ENCODE measurements at regions of chr1 and their contacts with region 1.

Region 1: DNA sequence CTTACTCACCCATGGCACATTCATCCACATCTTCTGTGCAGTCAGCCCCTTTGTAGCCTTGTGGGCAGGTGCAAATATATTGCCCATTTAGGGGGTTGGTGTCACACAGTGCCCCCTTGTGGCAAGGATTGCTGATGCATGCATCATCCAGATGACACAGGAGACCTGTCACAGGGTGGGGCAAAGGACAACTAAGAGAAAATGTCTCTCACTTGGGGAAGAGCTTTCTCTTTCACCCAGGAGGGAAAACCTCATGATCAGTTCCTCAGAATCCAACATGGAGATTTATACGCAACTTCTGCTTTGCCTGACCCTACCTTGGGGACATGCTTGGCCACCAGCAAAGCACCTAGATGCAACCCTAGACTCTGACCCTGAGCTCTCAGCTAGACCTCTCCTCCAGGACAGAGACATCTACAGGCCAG is 71.8 kb upstream of the ADAM30 start:
- DNase-seq: peak; percentile 49 to 70 (median 55)
- H3K4me3 ChIP-seq: no peak overlapping the region
- H3K4me3 Mint-ChIP-seq: no peak overlapping the region
- H3K27ac ChIP-seq: no peak overlapping the region
- H3K27ac Mint-ChIP-seq: peak overlapping the region in 5 of 7 donors; percentile 21 to 82 (median 73)
- H3K4me1 ChIP-seq: no peaks in the 10 kb centered on the region
- H3K4me1 Mint-ChIP-seq: peaks cover 2 to 6% (median 4%) of the 10 kb centered on the region in 4 donors
- H3K27me3 ChIP-seq: no peaks in the 10 kb centered on the region
- H3K27me3 Mint-ChIP-seq: no peaks in the 10 kb centered on the region

Region 2: DNA sequence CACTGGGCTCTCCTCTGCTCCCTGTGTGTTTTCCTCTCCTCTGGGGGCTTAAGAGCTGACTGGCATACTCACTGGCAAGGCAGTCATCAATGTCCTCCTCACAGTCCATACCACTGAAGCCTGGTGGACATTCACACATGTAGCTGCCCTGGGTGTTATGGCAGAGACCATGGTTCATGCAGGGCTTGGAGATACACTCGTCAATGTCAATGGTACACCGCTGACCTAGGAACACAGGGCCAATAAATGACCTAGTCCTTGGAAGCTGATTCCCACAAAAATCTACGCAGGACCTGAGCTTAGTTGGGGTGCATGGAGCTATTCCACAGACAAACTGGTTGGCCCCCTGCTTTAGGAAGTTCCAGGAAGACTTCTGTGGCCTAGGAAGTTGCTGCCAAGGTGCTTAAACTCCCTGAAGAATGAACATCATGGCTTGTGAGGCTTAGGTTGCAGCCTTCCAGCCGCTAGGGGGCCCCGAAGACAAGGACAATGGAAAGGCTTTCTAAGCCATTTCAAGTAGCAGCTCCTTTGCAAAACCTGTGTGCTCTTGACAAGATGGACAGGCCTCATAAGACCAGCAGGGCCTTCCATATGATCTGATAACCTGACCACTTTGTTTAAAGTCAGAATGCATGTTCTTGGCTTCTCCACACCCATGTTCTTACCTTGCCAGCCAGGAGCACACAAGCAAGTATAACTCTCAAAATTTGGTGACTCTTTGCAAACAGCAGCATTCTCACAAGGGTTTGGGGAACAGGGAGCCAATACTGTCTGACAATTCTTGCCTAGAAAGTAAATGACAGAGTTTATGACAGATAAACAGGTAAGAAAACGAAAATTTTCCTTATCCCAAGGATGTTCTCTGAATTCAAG is 19.5 kb before region 1 on chr1:
- CTCF ChIA-PET with region 1: interaction called, 76 read pairs
- POLR2A ChIA-PET with region 1: no interaction called
- intact Hi-C with region 1: no loop called
- DNase-seq: peak; percentile 49 to 60 (median 53)
- H3K4me3 ChIP-seq: no peak overlapping the region
- H3K4me3 Mint-ChIP-seq: no peak overlapping the region
- H3K27ac ChIP-seq: no peak overlapping the region
- H3K27ac Mint-ChIP-seq: no peak overlapping the region
- H3K4me1 ChIP-seq: no peaks in the 10 kb centered on the region
- H3K4me1 Mint-ChIP-seq: peaks cover 0 to 2% (median 0%) of the 10 kb centered on the region in 4 donors
- H3K27me3 ChIP-seq: no peaks in the 10 kb centered on the region
- H3K27me3 Mint-ChIP-seq: no peaks in the 10 kb centered on the region

Region 3: GRCh38 chr1:119984771-119985170 is 16.7 kb after region 1 on chr1:
- CTCF ChIA-PET with region 1: interaction called, 13 read pairs
- POLR2A ChIA-PET with region 1: no interaction called
- intact Hi-C with region 1: no loop called
- DNase-seq: no peak
- H3K4me3 ChIP-seq: no peak overlapping the region
- H3K4me3 Mint-ChIP-seq: no peak overlapping the region
- H3K27ac ChIP-seq: no peak overlapping the region
- H3K27ac Mint-ChIP-seq: peak overlapping the region in 2 of 7 donors; percentile 10 to 20
- H3K4me1 ChIP-seq: peaks cover 21% of the 10 kb centered on the region
- H3K4me1 Mint-ChIP-seq: peaks cover 20 to 38% (median 26%) of the 10 kb centered on the region in 4 donors
- H3K27me3 ChIP-seq: no peaks in the 10 kb centered on the region
- H3K27me3 Mint-ChIP-seq: no peaks in the 10 kb centered on the region

Measured in CD4-positive, alpha-beta memory T cell (primary cell).